CD8-positive, alpha-beta T cell (primary cell): ENCODE measurements at regions of chr3 and their contacts with region 1.

Region 1: DNA sequence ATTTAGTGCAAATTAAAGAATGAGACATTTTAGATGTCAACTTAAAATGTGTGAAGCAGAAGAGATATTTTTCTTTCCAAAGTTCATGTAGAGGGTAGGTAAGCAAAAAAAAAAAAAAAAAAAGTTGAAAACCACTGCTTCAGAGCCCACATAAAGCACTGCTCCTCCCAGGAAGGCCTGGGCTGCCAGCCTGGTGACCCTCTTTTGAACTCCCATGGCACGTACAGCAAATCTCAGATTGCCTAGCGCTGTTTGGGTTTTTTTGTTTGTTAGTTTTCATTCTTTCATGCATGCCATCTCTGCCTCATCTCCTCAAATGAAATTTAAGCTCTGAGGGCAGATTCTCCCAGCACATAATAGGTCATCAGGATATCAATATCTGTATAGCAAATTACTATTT is 120.1 kb downstream of the SRGAP3 start:
- DNase-seq: no peak
- ATAC-seq: no peak
- H3K4me3 ChIP-seq: no peak overlapping the region
- H3K4me3 Mint-ChIP-seq: no peak overlapping the region
- H3K27ac ChIP-seq: no peak overlapping the region
- H3K27ac Mint-ChIP-seq: no peak overlapping the region
- H3K4me1 ChIP-seq: no peaks in the 10 kb centered on the region
- H3K4me1 Mint-ChIP-seq: peaks cover 2% of the 10 kb centered on the region
- H3K27me3 ChIP-seq: no peaks in the 10 kb centered on the region
- H3K27me3 Mint-ChIP-seq: no peaks in the 10 kb centered on the region
- CTCF ChIP-seq: no peak

Region 2: DNA sequence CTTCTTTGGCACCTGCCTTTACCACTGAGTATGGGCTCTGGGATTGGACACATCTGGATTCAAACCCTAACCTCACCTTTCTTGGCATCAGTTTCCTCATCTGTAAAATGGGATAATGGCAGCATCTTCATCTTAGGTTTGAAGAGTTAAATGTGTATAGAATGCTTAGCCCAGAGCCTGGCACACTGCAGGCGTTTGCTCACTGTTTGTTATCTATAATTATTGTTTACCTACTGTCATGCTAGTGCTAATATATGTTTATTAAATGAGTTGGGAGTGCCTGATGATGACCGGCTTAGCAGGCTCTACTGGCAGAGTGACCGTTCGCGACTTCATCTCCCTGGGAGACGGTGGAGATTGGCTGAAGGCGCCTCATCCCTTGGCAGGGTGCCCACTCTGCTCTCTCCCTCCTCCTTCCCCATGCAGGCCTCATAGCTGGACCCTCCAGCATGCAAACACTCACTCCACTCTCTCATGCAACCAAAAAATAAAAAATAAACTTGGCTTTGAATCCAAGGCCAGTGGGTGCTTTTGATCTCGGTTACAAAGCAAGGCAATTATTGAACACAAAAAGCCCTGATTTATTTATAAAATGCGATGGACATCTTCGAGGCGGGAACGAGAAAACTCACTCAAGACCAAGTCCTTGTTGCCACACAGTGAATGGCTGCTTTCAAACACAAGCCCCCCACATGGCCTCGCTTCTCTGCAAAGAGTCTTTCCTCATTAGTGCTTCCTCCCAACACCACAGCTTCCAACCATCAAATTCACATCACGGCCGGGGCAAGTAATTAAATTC is 30.6 kb before region 1 on chr3:
- CTCF ChIA-PET with region 1: no interaction called
- POLR2A ChIA-PET with region 1: no interaction called
- intact Hi-C with region 1: no loop called
- DNase-seq: no peak
- ATAC-seq: no peak
- H3K4me3 ChIP-seq: no peak overlapping the region
- H3K4me3 Mint-ChIP-seq: no peak overlapping the region
- H3K27ac ChIP-seq: no peak overlapping the region
- H3K27ac Mint-ChIP-seq: no peak overlapping the region
- H3K4me1 ChIP-seq: no peaks in the 10 kb centered on the region
- H3K4me1 Mint-ChIP-seq: no peaks in the 10 kb centered on the region
- H3K27me3 ChIP-seq: no peaks in the 10 kb centered on the region
- H3K27me3 Mint-ChIP-seq: no peaks in the 10 kb centered on the region
- CTCF ChIP-seq: no peak

Region 3: GRCh38 chr3:9111866-9112265 is 17.5 kb before region 1 on chr3:
- CTCF ChIA-PET with region 1: no interaction called
- POLR2A ChIA-PET with region 1: no interaction called
- intact Hi-C with region 1: no loop called
- DNase-seq: no peak
- ATAC-seq: no peak
- H3K4me3 ChIP-seq: no peak overlapping the region
- H3K4me3 Mint-ChIP-seq: no peak overlapping the region
- H3K27ac ChIP-seq: no peak overlapping the region
- H3K27ac Mint-ChIP-seq: no peak overlapping the region
- H3K4me1 ChIP-seq: no peaks in the 10 kb centered on the region
- H3K4me1 Mint-ChIP-seq: no peaks in the 10 kb centered on the region
- H3K27me3 ChIP-seq: no peaks in the 10 kb centered on the region
- H3K27me3 Mint-ChIP-seq: no peaks in the 10 kb centered on the region
- CTCF ChIP-seq: no peak

Region 4: DNA sequence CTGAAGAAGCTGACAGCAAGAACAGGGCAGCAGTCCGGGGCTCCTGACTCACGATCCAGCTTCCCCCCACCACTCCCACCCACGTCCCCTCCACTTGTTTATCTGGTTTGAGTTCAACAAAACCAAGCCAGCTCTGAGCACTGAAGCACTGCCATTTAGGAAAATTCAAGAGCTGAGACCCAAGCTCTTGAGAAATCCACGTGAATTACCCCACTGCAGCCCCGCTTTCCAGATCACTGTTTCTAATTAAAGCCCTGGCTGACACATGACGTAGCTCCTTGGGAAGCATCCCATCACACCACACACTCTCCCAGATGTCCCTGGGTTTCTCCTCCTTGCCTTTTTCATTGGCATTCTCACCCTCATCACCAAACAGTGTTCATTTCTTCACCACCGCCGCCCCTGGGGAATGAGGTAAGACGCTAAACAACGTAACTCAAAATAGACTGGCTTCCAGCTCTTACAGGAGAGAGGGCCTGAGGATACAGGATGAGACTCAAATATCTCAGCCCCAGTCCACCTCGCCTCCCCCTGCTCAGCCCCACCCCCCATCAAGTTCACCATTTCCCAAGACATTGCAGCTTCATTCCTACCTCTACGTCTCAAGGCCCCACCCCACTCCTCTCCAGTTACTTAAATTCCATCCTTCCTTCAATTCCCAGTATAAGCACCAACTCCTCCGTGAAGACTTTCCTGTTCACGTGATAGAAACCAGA is 24.7 kb after region 1 on chr3:
- CTCF ChIA-PET with region 1: no interaction called
- POLR2A ChIA-PET with region 1: no interaction called
- intact Hi-C with region 1: loop called in 1 of 2 experiments (anchors 2 kb)
- DNase-seq: no peak
- ATAC-seq: no peak
- H3K4me3 ChIP-seq: no peak overlapping the region
- H3K4me3 Mint-ChIP-seq: no peak overlapping the region
- H3K27ac ChIP-seq: no peak overlapping the region
- H3K27ac Mint-ChIP-seq: no peak overlapping the region
- H3K4me1 ChIP-seq: no peaks in the 10 kb centered on the region
- H3K4me1 Mint-ChIP-seq: no peaks in the 10 kb centered on the region
- H3K27me3 ChIP-seq: no peaks in the 10 kb centered on the region
- H3K27me3 Mint-ChIP-seq: no peaks in the 10 kb centered on the region
- CTCF ChIP-seq: no peak